OCI-LY7 (cell line): ENCODE measurements at regions of chr16 and their contacts with region 1.

Region 1: GRCh38 chr16:24568392-24568791 is 29.0 kb downstream of the RBBP6 start:
- DNase-seq: no peak
- H3K4me3 ChIP-seq: no peak overlapping the region
- H3K27ac ChIP-seq: no peak overlapping the region
- H3K4me1 ChIP-seq: no peaks in the 10 kb centered on the region
- CTCF ChIP-seq: peak; percentile 67

Region 2: GRCh38 chr16:24810951-24811843 is 242.8 kb after region 1 on chr16:
- CTCF ChIA-PET with region 1: no interaction called
- POLR2A ChIA-PET with region 1: interaction called, 3 read pairs
- intact Hi-C with region 1: loop called (anchors 10 kb)
- DNase-seq: no peak
- H3K4me3 ChIP-seq: no peak overlapping the region
- H3K27ac ChIP-seq: no peak overlapping the region
- H3K4me1 ChIP-seq: no peaks in the 10 kb centered on the region
- CTCF ChIP-seq: no peak